Astrocyte of the cerebellum (primary cell): ENCODE measurements at regions of chr1 and their contacts with region 1.

Region 1: DNA sequence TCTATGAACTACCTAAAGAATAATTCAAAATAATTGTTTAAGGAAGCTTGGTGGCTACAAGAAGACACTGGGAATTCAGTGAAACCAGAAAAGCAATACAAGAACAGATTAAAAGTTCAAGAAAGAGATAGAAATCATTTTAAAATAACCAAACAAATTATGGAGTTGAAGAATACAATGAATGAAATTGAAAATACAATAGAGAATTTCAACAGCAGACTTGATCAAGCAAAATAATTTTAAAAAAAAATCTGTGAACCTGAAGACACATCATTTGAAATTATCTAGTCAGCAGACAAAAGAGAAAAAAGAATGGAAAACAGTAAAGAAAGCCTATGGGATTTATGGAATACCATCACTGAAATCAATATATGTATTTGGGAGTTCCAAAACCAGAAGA is 31.2 kb upstream of the WNT2B start:
- DNase-seq: no peak
- H3K4me3 ChIP-seq: no peak overlapping the region
- CTCF ChIP-seq: no peak

Region 2: DNA sequence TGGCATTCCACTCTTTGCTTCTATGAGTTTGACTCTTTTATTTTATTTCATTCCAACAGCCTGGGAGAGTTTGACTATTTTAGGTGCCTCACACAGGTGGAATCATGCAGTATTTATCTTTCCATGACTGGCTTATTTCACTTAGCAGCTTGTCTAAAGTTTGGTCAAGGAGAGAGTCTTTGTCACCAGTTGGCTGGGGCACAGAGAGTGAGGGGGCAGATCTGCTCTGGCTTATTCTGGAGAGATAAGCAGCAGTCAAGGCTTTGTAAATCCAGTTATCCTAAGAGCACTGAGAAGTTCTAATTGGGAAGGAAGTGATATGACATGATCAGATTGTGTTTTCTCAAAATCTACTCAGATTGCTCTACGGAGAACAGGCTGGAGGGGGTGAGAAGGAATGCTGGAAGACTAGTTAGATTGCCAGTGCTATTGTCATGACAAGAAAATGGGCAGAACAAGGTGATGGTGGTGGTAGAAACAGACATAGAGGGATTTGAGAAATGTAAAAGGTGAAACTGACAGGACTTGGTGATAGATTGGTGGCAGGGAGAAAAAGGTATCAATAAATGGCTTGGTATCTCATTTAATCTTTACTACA is 93.7 kb before region 1 on chr1:
- in situ Hi-C with region 1: loop called (anchors 5 kb)
- DNase-seq: no peak
- H3K4me3 ChIP-seq: no peak overlapping the region
- CTCF ChIP-seq: no peak

Region 3: DNA sequence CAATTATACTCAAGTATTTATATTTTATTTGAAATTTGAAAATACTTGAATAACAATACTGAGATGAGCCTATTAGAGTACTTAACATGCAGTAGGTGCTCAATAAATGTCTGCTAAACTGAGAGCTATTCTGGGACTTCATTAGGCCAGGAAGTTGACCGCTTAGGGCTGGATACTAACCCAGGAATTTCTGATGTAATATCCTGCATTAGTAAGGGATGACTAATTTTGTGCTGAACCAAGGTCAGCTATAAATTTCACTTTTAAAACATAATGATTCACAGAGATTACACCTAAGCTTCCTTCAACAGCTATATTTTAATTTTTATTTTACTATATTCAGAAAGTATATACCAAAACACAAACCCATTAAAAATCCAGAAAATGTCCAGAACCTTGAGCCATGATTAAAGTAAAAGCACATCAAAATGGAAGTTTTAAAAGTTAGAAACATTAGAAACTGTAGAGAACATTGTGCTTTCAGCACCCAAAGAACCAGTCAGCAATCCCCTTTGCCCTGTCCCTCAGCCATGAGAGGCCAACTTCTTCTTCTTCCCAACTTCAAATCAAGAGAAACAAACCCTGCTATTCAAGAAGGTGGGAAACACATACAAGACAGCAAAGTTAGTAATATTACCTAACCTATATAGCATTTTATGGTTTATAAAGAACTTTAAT is 66.6 kb after region 1 on chr1:
- in situ Hi-C with region 1: loop called (anchors 5 kb)
- DNase-seq: peak; percentile 81
- H3K4me3 ChIP-seq: no peak overlapping the region
- CTCF ChIP-seq: no peak